GM10248 (cell line): ENCODE measurements at regions of chr6 and their contacts with region 1.

Region 1: DNA sequence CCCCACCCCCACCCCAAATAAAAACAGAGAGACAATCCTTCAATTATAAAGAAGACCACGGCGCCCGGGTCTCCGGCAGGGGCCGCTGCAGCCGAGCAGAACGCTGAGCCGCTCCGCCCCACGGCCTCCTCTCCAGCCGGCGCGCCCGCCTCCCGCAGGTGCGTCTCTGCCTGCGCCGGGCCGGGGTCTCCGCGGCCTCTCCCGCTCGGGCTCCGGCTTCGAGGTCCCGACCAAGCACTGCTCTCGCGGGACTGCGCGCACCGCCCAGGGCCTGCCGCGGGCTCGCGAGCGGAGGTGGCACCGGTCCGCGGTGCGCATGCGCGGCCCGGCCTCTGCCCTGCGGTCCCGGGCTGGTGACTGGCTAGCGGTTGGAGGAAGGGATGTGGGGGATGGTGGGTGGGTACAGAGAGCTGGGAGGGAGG is 241 bp upstream of the SIRT5 start:
- DNase-seq: peak; percentile 97
- CTCF ChIP-seq: peak; percentile 61

Region 2: GRCh38 chr6:12313992-12314805 is 1260.0 kb before region 1 on chr6:
- CTCF ChIA-PET with region 1: no interaction called
- POLR2A ChIA-PET with region 1: no interaction called
- DNase-seq: no peak
- CTCF ChIP-seq: no peak

Region 3: DNA sequence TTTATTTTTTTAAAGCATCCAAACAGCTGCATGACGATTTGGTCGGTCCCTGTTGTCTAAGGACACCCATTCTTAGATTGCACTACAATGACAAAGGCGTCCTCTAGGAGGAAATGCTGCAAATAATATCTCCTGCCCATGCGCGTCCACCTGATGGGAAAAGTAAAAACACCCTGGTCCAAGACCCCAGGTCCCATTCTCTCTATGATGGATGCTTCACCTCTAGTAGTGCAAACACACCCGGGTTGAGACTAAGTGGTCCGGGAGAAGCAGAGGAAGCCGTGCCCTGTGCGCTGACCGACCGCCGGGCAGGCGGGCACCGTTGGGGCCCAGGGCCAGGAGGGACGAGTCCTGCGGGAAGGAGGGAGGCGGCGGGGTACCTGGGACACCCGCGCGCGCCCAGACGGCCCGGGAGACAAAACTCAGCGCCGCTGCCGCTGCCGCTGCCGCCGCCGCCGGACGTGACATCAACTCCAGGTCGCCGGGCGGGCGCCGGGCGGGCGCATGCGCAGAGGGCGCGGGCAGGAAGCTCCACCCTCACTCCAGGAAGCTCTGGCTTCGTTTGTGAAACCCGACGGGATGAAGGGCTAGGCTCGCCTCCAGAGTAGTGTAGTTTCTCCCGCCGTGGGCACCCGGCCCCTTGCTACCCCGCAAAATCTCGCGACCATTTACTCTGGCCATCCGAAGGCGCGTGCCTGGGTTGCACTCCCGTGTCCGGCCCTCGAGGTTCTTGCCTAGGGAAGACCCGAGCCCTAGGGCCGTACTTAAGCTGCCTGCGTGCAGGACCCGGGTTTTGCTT is 245.9 kb before region 1 on chr6 and contains the start of gene TBC1D7:
- CTCF ChIA-PET with region 1: interaction called, 28 read pairs
- POLR2A ChIA-PET with region 1: no interaction called
- DNase-seq: peak; percentile 95
- CTCF ChIP-seq: no peak

Region 4: GRCh38 chr6:13478525-13478966 is 95.6 kb before region 1 on chr6:
- CTCF ChIA-PET with region 1: interaction called, 13 read pairs
- POLR2A ChIA-PET with region 1: no interaction called
- DNase-seq: peak; percentile 36
- CTCF ChIP-seq: no peak

Region 5: GRCh38 chr6:13526727-13527670 is 47.2 kb before region 1 on chr6:
- CTCF ChIA-PET with region 1: interaction called, 12 read pairs
- POLR2A ChIA-PET with region 1: no interaction called
- DNase-seq: peak; percentile 28
- CTCF ChIP-seq: no peak

Region 6: GRCh38 chr6:13559251-13559650 is 14.9 kb before region 1 on chr6:
- CTCF ChIA-PET with region 1: interaction called, 89 read pairs
- POLR2A ChIA-PET with region 1: no interaction called
- DNase-seq: no peak
- CTCF ChIP-seq: no peak

Region 7: GRCh38 chr6:13593720-13594119 is 19.6 kb after region 1 on chr6:
- CTCF ChIA-PET with region 1: interaction called, 45 read pairs
- POLR2A ChIA-PET with region 1: no interaction called
- DNase-seq: no peak
- CTCF ChIP-seq: no peak

Region 8: DNA sequence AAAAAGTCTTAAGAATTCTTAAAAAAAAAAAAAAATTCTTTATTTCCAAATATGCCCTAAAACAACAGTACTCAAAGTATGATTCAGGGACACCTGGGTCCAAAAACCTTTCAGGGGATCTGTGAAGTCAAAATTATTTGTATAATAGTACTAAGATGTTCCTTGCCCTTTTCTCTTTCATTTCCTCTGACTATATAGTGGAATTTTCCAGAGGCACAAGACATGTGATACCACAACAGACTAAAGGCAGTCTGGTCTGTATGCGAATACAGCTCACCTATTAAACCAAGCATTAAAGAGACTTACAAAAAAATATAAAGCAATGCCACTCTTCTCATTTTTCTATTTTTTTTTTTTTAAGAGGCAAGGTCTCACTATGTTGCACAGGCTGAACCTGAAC is 56.3 kb after region 1 on chr6:
- CTCF ChIA-PET with region 1: interaction called, 12 read pairs
- POLR2A ChIA-PET with region 1: no interaction called
- DNase-seq: no peak
- CTCF ChIP-seq: no peak

Region 9: DNA sequence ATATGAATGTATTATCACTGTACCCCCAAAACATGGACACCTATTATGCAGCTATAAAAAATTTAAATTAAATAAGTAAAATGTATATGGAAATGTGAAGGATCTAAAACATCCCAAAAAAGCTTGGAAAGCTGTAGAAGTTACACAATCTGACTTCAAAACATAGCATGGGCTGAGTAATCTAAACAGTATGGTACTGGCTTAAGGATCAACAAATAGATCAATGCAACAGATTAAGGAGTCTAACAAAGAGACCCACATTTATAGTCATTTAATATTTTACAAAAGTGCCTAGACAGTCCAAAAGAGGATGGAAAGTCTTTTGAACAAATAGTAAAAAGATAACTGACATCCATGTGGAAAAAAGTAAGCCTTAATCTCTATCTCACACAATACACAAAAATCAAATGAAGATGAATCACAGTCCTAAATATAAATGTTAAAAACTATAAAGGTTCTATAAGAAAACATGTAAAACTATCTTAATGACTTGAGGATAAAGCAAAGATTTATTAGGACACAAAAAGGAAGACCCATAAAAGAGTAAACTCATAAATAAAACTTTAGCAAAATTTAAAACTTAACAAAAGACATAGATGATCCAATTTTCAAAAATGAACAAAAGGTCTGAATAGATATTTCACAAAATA is 90.7 kb after region 1 on chr6:
- CTCF ChIA-PET with region 1: no interaction called
- POLR2A ChIA-PET with region 1: no interaction called
- DNase-seq: no peak
- CTCF ChIP-seq: no peak

Region 10: GRCh38 chr6:14276667-14277404 is 702.7 kb after region 1 on chr6:
- CTCF ChIA-PET with region 1: no interaction called
- POLR2A ChIA-PET with region 1: no interaction called
- DNase-seq: peak; percentile 76
- CTCF ChIP-seq: no peak